OCI-LY7 (cell line): ENCODE measurements at regions of chr11 and their contacts with region 1.

Region 1: GRCh38 chr11:115869780-115870431 is 365.7 kb upstream of the CADM1 start:
- DNase-seq: peak; percentile 82
- H3K4me3 ChIP-seq: no peak overlapping the region
- H3K27ac ChIP-seq: no peak overlapping the region
- H3K4me1 ChIP-seq: peaks cover 47% of the 10 kb centered on the region
- CTCF ChIP-seq: peak; percentile 89

Region 2: GRCh38 chr11:115659061-115659963 is 210.6 kb before region 1 on chr11:
- CTCF ChIA-PET with region 1: no interaction called
- POLR2A ChIA-PET with region 1: no interaction called
- intact Hi-C with region 1: no loop called
- DNase-seq: no peak
- H3K4me3 ChIP-seq: no peak overlapping the region
- H3K27ac ChIP-seq: no peak overlapping the region
- H3K4me1 ChIP-seq: no peaks in the 10 kb centered on the region
- CTCF ChIP-seq: no peak

Region 3: DNA sequence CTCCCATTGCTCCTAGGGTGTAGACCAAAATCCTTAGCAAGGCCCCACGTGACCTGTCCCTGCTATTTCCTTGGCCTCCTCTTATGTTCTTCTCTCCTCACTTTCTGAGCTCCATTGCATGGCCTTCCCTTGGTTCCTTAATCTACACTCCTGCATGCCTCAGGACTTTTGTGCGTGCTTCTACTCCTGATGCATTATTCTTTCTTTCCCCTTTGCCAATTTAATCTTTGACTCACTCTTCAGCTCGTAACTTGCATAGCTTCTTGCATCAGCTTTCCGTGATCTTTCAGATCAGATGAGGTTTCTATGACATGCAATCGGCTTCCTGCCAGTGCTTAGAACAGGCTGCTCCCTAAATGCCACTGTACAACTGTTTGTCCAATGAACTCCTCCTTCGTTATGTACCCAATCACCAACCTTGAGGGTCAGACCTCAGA is 104.1 kb before region 1 on chr11:
- CTCF ChIA-PET with region 1: no interaction called
- POLR2A ChIA-PET with region 1: no interaction called
- intact Hi-C with region 1: no loop called
- DNase-seq: no peak
- H3K4me3 ChIP-seq: no peak overlapping the region
- H3K27ac ChIP-seq: no peak overlapping the region
- H3K4me1 ChIP-seq: no peaks in the 10 kb centered on the region
- CTCF ChIP-seq: no peak

Region 4: GRCh38 chr11:115885535-115886421 is 15.9 kb after region 1 on chr11:
- CTCF ChIA-PET with region 1: no interaction called
- POLR2A ChIA-PET with region 1: interaction called, 20 read pairs
- intact Hi-C with region 1: no loop called
- DNase-seq: no peak
- H3K4me3 ChIP-seq: no peak overlapping the region
- H3K27ac ChIP-seq: no peak overlapping the region
- H3K4me1 ChIP-seq: peaks cover 12% of the 10 kb centered on the region
- CTCF ChIP-seq: no peak

Region 5: DNA sequence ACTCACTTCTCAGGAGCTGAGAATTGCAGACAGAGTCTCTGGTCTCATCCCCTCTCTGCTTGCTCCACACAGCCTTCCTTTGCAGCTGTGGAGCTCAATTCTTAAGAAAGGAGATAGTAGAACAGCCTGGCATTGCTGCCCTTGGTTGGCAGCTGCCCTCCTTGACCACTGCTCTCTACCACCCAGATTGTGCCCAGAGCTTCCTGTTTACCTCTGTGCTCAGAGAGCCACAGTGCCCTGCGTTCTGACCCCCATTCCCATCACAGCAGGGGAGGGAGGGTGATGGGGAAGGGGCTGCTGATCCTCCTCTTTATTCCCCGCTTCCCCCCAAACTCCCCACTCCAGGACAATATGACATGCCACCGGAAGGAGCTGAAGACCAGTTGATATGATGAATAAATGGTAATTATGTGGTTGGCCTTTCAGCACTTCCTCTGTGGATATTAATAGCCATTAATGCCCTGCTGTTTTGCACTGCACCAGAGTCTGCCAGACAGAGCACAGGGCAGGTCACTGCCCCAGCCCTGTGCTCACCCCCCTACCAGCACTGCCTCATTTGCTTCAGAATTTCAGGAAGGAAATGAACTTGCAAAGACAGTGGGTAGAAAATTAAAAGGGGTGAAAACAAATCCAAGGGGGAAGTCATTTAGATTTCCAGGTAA is 61.1 kb after region 1 on chr11:
- CTCF ChIA-PET with region 1: interaction called, 12 read pairs
- POLR2A ChIA-PET with region 1: interaction called, 17 read pairs
- intact Hi-C with region 1: loop called (anchors 2 kb)
- DNase-seq: peak; percentile 81
- H3K4me3 ChIP-seq: peak overlapping the region; percentile 45
- H3K27ac ChIP-seq: peak overlapping the region; percentile 51
- H3K4me1 ChIP-seq: peaks cover 56% of the 10 kb centered on the region
- CTCF ChIP-seq: no peak

Region 6: GRCh38 chr11:115984228-115984627 is 114.3 kb after region 1 on chr11:
- CTCF ChIA-PET with region 1: interaction called, 4 read pairs
- POLR2A ChIA-PET with region 1: no interaction called
- intact Hi-C with region 1: loop called (anchors 2 kb)
- DNase-seq: peak; percentile 13
- H3K4me3 ChIP-seq: no peak overlapping the region
- H3K27ac ChIP-seq: no peak overlapping the region
- H3K4me1 ChIP-seq: no peaks in the 10 kb centered on the region
- CTCF ChIP-seq: peak; percentile 38

Region 7: DNA sequence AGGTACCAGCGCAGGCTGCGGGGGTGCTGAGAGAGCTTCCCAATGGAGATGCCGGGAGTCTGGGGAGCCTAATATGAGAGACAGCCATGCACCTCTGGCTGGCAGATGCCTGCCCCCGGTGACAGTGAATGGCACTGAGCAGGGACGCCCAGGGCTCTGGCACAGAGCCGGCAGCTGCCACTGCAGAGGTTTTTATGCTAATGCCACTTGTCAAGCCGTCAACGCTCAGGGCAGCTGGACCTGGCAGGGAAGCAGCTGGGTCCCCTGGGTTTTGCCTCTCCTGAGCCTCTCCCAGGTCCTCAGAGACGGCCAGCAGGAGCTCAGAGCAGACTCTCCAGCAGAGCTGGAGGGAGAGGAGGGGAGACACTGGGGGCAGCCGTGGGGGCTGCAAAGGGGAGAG is 329.3 kb after region 1 on chr11:
- CTCF ChIA-PET with region 1: no interaction called
- POLR2A ChIA-PET with region 1: no interaction called
- intact Hi-C with region 1: no loop called
- DNase-seq: no peak
- H3K4me3 ChIP-seq: no peak overlapping the region
- H3K27ac ChIP-seq: no peak overlapping the region
- H3K4me1 ChIP-seq: no peaks in the 10 kb centered on the region
- CTCF ChIP-seq: no peak

Region 8: GRCh38 chr11:116224154-116224888 is 354.4 kb after region 1 on chr11:
- CTCF ChIA-PET with region 1: no interaction called
- POLR2A ChIA-PET with region 1: no interaction called
- intact Hi-C with region 1: loop called (anchors 1 kb)
- DNase-seq: peak; percentile 45
- H3K4me3 ChIP-seq: no peak overlapping the region
- H3K27ac ChIP-seq: no peak overlapping the region
- H3K4me1 ChIP-seq: no peaks in the 10 kb centered on the region
- CTCF ChIP-seq: peak; percentile 85